HCT116 (cell line): ENCODE measurements at regions of chr14 and their contacts with region 1.

Region 1: DNA sequence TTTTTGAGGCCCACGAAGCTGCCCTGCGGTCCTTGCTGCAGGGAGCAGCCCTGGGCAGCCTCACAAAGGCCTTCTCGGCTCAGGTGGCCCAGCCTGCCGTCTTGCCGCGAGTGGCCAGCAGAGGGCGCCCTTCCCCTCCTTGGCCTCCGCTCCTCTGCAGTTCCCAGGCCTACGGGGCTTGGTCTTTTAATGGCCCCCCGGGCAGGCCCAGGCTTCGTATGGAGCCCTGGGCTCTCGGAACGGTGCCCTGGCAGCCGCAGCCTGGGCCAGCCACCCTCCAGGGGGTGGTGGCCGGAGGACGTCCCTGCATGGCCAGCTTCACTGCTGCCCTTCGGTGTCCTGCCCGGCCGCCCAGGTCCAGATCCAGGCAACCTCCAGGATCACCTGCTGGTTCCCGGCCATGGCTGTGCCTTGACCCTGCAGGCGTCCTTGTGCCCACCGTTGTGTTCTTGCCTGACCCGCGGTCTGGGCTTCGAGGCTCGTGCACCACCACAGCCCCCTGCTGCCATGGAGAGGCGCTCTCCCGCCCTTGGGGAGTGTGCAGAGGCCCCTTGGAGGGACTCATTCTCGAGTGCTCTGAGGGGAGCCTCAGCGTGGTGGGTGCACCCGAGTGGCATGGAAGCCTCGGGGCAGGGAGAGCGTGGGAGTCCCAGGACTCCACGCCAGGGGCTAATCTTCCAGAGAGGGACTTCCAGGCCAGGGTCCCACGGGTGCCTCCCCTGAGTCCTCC is 9.4 kb downstream of the ASPG start:
- DNase-seq: no peak
- ATAC-seq: peak; percentile 84
- H3K4me3 ChIP-seq: no peak overlapping the region
- H3K27ac ChIP-seq: peak overlapping the region; percentile 16; the same call in 1 of the 2 replicates
- H3K4me1 ChIP-seq: peaks cover 7 to 14% of the 10 kb centered on the region in 2 experiments; a peak in 3 of 4 replicates
- H3K27me3 ChIP-seq: no peaks in the 10 kb centered on the region
- CTCF ChIP-seq: peak; percentile 83 to 89 (median 86)
- POLR2A ChIP-seq: no peak
- RAD21 ChIP-seq: peak; percentile 86

Region 2: GRCh38 chr14:104130974-104131651 is 36.2 kb after region 1 on chr14:
- CTCF ChIA-PET with region 1: interaction called, 4 read pairs
- POLR2A ChIA-PET with region 1: no interaction called
- RAD21 ChIA-PET with region 1: no interaction called
- intact Hi-C with region 1: loop called (anchors 1 kb)
- DNase-seq: no peak
- ATAC-seq: peak; percentile 81
- H3K4me3 ChIP-seq: no peak overlapping the region
- H3K27ac ChIP-seq: no peak overlapping the region
- H3K4me1 ChIP-seq: no peaks in the 10 kb centered on the region; a peak in 1 of 4 replicates
- H3K27me3 ChIP-seq: no peaks in the 10 kb centered on the region
- CTCF ChIP-seq: peak; percentile 75 to 98 (median 81)
- POLR2A ChIP-seq: no peak
- RAD21 ChIP-seq: peak; percentile 97